PC-9 (cell line): ENCODE measurements at regions of chr2 and their contacts with region 1.

Region 1: DNA sequence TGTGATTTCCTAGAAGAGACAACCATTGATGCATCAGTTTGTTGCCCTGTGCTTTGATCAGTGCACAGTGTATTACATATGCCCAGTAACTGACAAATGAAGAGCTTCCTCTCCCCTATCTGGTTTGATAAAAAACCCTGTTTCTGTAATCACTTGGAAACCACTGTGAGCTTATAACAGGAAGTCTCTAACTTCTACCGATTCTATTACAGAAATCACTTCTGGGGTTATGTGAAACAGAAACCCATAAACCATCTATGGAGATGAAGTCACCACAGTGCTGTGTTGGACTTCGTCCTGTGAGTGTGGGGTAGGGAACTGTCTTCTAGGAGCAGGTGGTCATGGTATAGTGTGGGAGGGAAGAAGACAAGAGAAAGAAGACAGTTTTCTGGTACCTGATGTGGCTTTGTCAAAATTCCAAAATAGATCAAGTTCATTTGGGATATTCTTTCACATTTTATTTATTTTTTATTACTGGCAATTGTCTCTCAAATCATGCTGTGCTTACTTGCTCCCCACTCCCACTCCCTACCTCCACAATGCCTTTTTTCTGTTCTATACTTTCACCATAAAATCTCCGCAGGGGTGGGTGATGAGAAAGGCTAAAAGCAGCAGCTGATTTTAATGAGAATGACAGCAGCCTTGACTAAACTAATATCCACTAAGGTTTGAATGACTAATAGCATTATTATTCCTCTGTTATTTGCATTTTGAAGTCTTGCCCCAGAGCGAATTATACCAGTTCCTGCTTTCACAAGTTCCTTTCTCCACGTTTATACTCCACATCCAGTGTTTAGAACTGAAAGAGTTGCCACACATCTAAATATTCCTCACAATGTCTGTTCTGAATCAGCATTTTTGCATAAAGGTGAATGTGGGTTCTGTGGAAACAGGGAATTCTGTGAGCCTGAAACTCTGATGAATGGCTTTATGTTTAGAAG is 41.7 kb upstream of the RND3 start:
- DNase-seq: peak in 1 of 2 experiments; percentile 91
- H3K4me3 ChIP-seq: peak overlapping the region; percentile 33; the same call in 1 of the 2 replicates
- H3K27ac ChIP-seq: peak overlapping the region; percentile 95
- H3K4me1 ChIP-seq: peaks cover 51% of the 10 kb centered on the region
- H3K27me3 ChIP-seq: no peaks in the 10 kb centered on the region
- CTCF ChIP-seq: no peak

Region 2: GRCh38 chr2:149799013-149799705 is 730.0 kb before region 1 on chr2:
- CTCF ChIA-PET with region 1: no interaction called
- POLR2A ChIA-PET with region 1: no interaction called
- intact Hi-C with region 1: loop called (anchors 5 kb)
- DNase-seq: peak in 1 of 2 experiments; percentile 4
- H3K4me3 ChIP-seq: no peak overlapping the region
- H3K27ac ChIP-seq: no peak overlapping the region
- H3K4me1 ChIP-seq: no peaks in the 10 kb centered on the region
- H3K27me3 ChIP-seq: no peaks in the 10 kb centered on the region
- CTCF ChIP-seq: peak; percentile 37; the same call in 1 of the 2 replicates

Region 3: GRCh38 chr2:150167711-150168110 is 361.4 kb before region 1 on chr2:
- CTCF ChIA-PET with region 1: no interaction called
- POLR2A ChIA-PET with region 1: no interaction called
- intact Hi-C with region 1: loop called (anchors 2 kb)
- DNase-seq: peak; percentile 42 to 86
- H3K4me3 ChIP-seq: no peak overlapping the region
- H3K27ac ChIP-seq: peak overlapping the region; percentile 98
- H3K4me1 ChIP-seq: peaks cover 48% of the 10 kb centered on the region
- H3K27me3 ChIP-seq: no peaks in the 10 kb centered on the region
- CTCF ChIP-seq: no peak

Region 4: DNA sequence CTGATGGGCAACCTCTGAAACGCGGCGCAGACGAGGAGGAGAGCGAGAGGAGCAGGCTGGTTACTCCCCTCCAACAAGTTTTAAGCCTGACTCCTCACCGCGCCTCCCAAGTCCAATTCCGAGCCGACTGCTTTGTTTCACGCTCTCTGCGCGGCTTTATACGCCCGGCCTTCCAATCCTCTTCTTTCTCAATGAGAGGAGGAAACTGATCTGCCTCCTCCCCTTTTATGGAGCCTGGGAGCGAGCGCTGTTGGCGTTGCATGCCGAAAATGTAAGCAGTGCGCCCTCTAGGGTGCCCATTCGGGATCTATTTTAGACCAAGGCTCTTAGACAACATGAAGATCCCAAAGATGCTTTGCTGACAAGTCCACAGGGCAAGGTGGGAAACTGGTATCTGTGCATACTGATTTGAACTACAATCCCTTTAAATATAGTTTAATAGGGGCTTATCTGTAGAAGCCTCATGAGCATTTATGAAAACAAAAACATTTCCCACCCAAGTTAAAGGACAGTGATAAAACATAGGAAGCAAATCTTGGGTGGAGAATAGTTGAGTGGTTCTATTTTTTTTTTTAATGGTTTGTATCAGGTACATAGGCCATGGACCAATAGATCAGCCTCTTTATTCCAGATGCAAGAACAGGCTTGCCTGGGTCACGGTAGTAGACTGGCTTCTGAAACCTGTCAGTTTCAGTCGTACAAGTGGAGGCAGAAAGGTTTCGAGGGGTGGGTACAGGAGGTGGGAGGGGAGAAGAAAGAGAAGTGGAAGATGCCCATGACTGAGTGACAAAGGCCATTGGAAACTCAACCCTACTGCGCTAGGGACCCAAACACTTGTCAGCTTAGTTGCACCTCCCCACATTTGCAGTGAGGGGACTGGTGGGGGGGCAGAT is 41.3 kb before region 1 on chr2 and contains the start of gene RND3:
- CTCF ChIA-PET with region 1: no interaction called
- POLR2A ChIA-PET with region 1: interaction called, 4 read pairs
- intact Hi-C with region 1: loop called (anchors 1 kb)
- DNase-seq: peak; percentile 90 to 96
- H3K4me3 ChIP-seq: peak within 1 kb of the TSS; percentile 93
- H3K27ac ChIP-seq: peak within 1 kb of the TSS; percentile 92
- H3K4me1 ChIP-seq: peaks cover 16% of the 10 kb centered on the region
- H3K27me3 ChIP-seq: no peaks in the 10 kb centered on the region
- CTCF ChIP-seq: peak; percentile 87
- total RNA-seq, gene RND3: 72.9 and 99.1 TPM in 2 replicates

Region 5: GRCh38 chr2:150610671-150611279 is 81.6 kb after region 1 on chr2:
- CTCF ChIA-PET with region 1: no interaction called
- POLR2A ChIA-PET with region 1: no interaction called
- intact Hi-C with region 1: loop called (anchors 2 kb)
- DNase-seq: peak; percentile 35 to 56
- H3K4me3 ChIP-seq: no peak overlapping the region
- H3K27ac ChIP-seq: no peak overlapping the region
- H3K4me1 ChIP-seq: no peaks in the 10 kb centered on the region
- H3K27me3 ChIP-seq: no peaks in the 10 kb centered on the region
- CTCF ChIP-seq: peak; percentile 66